HEK293T (cell line): ENCODE measurements at regions of chr11 and their contacts with region 1.

Region 1: DNA sequence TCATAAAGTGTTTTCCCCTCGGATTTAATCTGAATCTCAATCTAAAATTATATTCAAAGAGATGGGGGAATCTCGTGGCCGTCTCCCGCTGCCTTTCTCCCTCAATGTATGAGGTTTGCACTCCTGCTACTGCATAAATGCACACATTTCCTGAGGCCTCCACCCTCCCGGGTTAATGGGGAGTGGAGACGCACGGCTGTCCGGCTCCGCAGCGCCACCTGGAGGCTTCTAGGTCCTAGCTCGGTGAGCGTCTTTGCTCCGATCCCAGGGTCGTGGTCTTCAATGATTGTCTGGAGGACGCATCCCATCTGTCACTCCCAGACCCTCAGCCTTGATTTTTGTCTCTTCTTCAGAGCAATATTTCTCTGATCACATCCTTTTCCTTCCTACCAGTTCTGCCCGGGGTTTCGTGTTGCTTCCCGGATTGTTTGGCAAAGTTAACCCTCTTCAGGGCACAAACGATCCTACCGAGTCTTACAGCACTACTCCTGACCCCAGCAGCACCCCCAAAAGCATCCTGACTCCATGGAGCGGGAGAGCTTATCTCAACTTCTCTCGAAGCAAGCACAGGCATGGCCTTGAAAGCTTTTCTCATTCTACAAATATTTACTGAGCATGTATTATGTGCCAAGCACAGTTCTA is at the start of gene LMO1:
- DNase-seq: peak; percentile 87

Region 2: GRCh38 chr11:8247312-8247711 is 16.6 kb before region 1 on chr11:
- CTCF ChIA-PET with region 1: interaction called, 12 read pairs
- POLR2A ChIA-PET with region 1: no interaction called
- DNase-seq: peak; percentile 55

Region 3: DNA sequence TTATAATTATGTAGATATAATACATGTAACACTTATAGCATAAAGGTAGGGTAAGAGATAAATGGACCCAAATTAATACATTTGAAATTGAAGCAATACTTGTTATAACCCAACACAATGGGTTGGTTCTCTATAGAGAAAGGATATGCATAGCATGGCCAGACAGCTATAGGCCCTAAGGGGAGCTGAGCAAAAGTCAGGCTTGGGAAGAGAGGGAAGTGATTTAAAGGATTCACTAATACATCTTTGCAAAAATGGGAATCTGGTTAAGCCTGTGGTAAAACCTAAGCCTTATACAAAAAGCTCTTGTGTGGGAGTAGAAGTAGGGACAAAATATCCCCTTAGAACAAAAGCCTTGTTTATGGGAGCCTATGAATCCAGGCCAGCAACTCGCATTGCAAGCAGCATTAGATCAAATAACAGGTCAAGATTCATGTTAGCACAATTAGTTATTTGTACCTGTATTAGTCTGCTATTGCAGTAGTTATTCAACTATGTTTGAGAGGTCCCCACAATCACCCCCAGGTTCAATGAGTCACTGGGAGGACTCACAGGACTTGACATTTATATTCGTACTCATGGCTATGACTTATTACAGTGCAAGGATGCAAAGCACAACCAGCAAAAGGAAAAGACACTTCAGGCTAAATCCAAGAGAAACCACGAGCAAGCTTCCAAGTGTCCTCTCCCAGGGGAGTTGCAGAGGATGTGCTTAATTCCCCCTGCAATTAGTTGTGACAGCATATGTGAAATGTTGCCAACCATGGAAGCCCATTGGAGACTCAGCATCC is 144.5 kb after region 1 on chr11:
- CTCF ChIA-PET with region 1: no interaction called
- POLR2A ChIA-PET with region 1: no interaction called
- DNase-seq: no peak